Panc1 (cell line): ENCODE measurements at regions of chr6 and their contacts with region 1.

Region 1: GRCh38 chr6:155561257-155561965 is 105.8 kb upstream of the NOX3 start:
- DNase-seq: no peak
- ATAC-seq: no peak
- H3K4me3 ChIP-seq: no peak overlapping the region
- H3K27ac ChIP-seq: no peak overlapping the region
- H3K4me1 ChIP-seq: no peaks in the 10 kb centered on the region
- H3K27me3 ChIP-seq: no peaks in the 10 kb centered on the region
- CTCF ChIP-seq: no peak

Region 2: DNA sequence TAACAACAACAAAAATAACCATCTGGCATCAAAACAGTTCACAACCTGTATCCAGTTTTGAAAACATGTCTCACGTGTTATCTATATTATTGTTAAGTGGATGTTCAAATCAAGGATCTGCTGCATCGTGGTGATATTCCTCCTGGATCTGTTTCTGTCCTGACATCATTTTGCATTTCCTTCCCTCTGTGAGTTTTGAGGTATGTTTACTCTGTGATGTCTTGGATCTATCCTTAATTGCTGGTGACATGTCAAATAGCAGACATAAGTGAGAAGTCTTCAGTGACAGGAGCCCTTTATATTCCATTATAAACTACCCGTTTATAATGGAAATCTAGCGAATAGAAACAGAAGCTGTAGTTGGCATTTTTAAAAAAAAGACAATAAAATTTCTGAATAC is 276.1 kb after region 1 on chr6:
- CTCF ChIA-PET with region 1: no interaction called
- POLR2A ChIA-PET with region 1: no interaction called
- in situ Hi-C with region 1: no loop called
- intact Hi-C with region 1: no loop called
- DNase-seq: no peak
- ATAC-seq: no peak
- H3K4me3 ChIP-seq: no peak overlapping the region
- H3K27ac ChIP-seq: no peak overlapping the region
- H3K4me1 ChIP-seq: no peaks in the 10 kb centered on the region
- H3K27me3 ChIP-seq: no peaks in the 10 kb centered on the region
- CTCF ChIP-seq: no peak

Region 3: DNA sequence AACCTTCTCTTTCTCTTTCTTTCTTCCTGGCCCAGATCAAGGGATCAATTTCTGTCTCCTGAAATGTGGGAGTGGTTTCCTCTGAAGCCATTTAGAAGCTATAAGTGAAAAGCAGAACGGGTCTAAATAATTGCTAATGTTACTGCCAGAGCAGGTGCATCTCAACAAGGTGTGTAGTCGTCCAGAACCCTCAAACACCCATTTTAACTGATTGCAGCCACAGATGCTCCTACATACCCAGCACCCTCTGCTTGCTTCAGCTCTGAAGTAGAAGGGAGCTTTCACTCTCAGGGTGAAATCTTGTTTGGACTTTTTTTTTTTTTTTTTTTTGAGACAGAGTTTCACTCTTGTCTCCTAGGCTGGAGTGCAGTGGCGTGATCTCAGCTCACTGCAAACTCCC is 623.7 kb after region 1 on chr6:
- CTCF ChIA-PET with region 1: no interaction called
- POLR2A ChIA-PET with region 1: interaction called, 11 read pairs
- in situ Hi-C with region 1: no loop called
- intact Hi-C with region 1: no loop called
- DNase-seq: no peak
- ATAC-seq: no peak
- H3K4me3 ChIP-seq: no peak overlapping the region
- H3K27ac ChIP-seq: no peak overlapping the region
- H3K4me1 ChIP-seq: no peaks in the 10 kb centered on the region
- H3K27me3 ChIP-seq: no peaks in the 10 kb centered on the region
- CTCF ChIP-seq: no peak